ENCODE measurements at regions of chr21 and their contacts with region 1.

Region 1: GRCh38 chr21:27564684-27565301 is 597.9 kb upstream of the ADAMTS5 start:
- DNase-seq: no peak
- H3K4me3 ChIP-seq: no peak overlapping the region
- H3K27ac ChIP-seq: no peak overlapping the region
- H3K4me1 ChIP-seq: peaks cover 0 to 10% of the 10 kb centered on the region in 2 donors
- H3K27me3 ChIP-seq: no peaks in the 10 kb centered on the region
- CTCF ChIP-seq: peak in 2 of 3 experiments; percentile 50 to 53

Region 2: GRCh38 chr21:26490771-26491170 is 1074.0 kb before region 1 on chr21:
- intact Hi-C with region 1: no loop called
- DNase-seq: no peak
- H3K4me3 ChIP-seq: no peak overlapping the region
- H3K27ac ChIP-seq: no peak overlapping the region
- H3K4me1 ChIP-seq: no peaks in the 10 kb centered on the region
- H3K27me3 ChIP-seq: no peaks in the 10 kb centered on the region
- CTCF ChIP-seq: no peak

Region 3: GRCh38 chr21:27423038-27423437 is 141.8 kb before region 1 on chr21:
- intact Hi-C with region 1: loop called (anchors 10 kb)
- DNase-seq: peak; percentile 23 to 92
- H3K4me3 ChIP-seq: no peak overlapping the region
- H3K27ac ChIP-seq: peak overlapping the region; percentile 60 to 64
- H3K4me1 ChIP-seq: peaks cover 8 to 29% of the 10 kb centered on the region in 2 donors
- H3K27me3 ChIP-seq: no peaks in the 10 kb centered on the region
- CTCF ChIP-seq: no peak

Region 4: DNA sequence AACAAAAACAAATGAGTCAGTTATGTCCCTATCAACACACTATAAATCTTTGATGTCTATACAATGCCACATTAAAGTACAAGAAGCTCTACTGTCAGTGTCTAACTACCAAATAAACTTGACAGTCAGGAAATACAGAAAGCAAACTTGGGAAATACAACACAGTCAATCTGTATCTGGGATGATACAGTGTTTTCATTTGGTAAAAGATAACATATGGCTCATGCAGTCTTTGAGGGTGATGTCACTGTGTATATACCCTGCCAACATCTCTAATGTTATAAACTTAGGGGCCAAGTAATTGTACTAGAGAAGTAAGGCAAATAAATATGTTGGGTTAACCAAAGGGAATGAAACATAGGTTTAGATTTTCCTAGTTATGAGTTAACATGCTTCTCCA is 45.4 kb before region 1 on chr21:
- intact Hi-C with region 1: no loop called
- DNase-seq: no peak
- H3K4me3 ChIP-seq: no peak overlapping the region
- H3K27ac ChIP-seq: no peak overlapping the region
- H3K4me1 ChIP-seq: no peaks in the 10 kb centered on the region
- H3K27me3 ChIP-seq: no peaks in the 10 kb centered on the region
- CTCF ChIP-seq: no peak